A549 (cell line): ENCODE measurements at regions of chr9 and their contacts with region 1.

Region 1: DNA sequence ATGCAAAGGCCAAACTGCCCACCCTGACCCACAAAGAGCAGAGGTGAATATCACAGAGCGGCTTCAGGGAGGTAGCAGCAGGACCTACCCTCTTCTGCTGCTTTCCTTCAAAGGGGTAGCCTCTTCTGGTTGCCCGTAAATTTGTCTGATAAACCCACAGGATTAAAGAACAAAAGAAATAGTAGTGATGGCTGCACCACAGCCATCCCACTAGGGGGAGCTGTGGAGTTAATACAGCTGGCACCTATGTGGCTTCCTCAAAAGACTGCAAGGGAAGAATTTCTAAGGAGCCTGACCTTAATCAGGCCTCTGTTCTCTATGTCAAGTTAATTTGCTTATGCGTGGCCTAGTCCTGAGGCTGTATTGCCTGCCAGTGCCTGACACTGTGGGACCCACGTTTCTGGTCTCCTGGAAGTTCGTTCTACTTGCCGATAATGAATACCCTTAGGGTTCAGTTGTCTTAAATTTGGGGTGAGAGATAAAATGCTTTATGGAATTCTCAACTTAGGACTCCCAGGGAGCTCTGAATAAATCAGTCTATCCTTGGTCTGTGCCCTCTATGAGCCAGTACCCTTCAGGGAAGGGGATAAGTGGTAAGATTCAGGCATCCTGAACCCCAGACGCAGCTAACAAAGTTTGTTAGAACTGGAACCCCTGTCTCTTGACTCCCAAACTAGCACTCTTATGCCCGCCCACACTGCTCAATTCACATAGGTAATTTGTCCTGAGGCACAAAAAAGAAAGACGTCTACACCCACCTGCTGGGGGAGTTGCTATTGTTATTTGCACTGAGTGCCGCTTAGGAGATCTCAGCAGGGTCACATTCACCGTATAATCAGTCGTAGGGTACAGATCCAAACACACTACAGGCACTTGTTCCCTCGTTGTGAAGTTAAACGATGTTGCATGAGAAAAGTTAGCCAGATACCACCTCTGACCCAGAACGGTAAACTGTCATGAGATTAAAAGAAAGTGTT is 77.1 kb downstream of the SUSD1 start:
- DNase-seq: peak; percentile 72 to 76
- ATAC-seq: peak; percentile 93 to 97
- H3K4me3 ChIP-seq: no peak overlapping the region
- H3K27ac ChIP-seq: peak overlapping the region; percentile 48 to 75; a peak in 4 of 6 replicates
- H3K4me1 ChIP-seq: peaks cover 4% of the 10 kb centered on the region
- CTCF ChIP-seq: peak; percentile 92
- EP300 ChIP-seq: no peak
- POLR2A ChIP-seq: no peak
- RAD21 ChIP-seq: peak; percentile 88 to 93

Region 2: DNA sequence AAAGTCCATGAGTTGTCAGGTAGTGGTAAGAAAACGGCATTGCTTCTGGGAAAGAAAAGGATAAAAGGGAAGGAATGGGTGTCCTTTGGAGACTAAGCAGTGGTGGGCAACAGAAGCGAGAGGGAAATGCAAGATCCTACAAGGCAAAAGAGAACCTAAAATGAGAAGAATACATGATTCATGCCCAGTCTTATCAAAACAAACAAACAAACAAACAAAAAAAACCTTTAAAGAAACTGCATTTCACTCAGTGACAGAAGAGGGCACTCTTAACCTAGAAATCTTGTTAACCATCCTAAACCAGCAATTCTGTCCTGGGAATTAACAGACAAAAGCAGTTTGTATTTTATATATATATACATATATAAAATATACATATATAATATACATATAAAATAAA is 11.4 kb before region 1 on chr9:
- CTCF ChIA-PET with region 1: interaction called, 45 read pairs
- POLR2A ChIA-PET with region 1: no interaction called
- DNase-seq: peak; percentile 40 to 52
- ATAC-seq: peak in 1 of 2 experiments; percentile 50; a peak in 2 of 6 replicates
- H3K4me3 ChIP-seq: no peak overlapping the region
- H3K27ac ChIP-seq: no peak overlapping the region
- H3K4me1 ChIP-seq: no peaks in the 10 kb centered on the region
- CTCF ChIP-seq: peak; percentile 81
- EP300 ChIP-seq: no peak
- POLR2A ChIP-seq: no peak
- RAD21 ChIP-seq: peak; percentile 80

Region 3: GRCh38 chr9:112119225-112120029 is 21.4 kb after region 1 on chr9:
- CTCF ChIA-PET with region 1: interaction called, 66 read pairs
- POLR2A ChIA-PET with region 1: no interaction called
- DNase-seq: peak; percentile 72 to 94
- ATAC-seq: peak; percentile 91 to 93
- H3K4me3 ChIP-seq: no peak overlapping the region
- H3K27ac ChIP-seq: peak overlapping the region; percentile 94 to 95
- H3K4me1 ChIP-seq: peaks cover 70% of the 10 kb centered on the region
- CTCF ChIP-seq: no peak
- EP300 ChIP-seq: peak; percentile 90 to 93
- POLR2A ChIP-seq: no peak
- RAD21 ChIP-seq: peak in 1 of 2 experiments; percentile 49; a peak in 3 of 5 replicates

Region 4: DNA sequence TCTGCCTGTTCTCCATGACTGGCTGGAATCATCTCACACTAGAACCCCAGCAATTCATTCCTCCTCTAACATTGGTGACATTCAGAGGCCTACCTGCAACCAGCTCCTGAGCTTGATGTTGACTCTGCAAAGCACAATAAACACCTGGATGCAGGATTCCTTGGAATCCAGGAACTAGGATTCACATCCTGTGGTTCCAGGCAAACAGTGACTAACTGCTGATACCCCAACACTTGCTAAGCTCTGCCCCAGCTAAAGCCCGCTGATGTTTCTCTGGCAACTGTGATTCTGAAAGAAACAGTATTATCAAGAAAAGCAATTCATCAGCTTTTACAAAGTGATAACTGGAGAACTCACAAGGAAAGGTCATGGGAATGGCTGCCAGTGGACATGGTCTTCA is 47.9 kb after region 1 on chr9:
- CTCF ChIA-PET with region 1: interaction called, 13 read pairs
- POLR2A ChIA-PET with region 1: no interaction called
- DNase-seq: peak in 1 of 2 experiments; percentile 64
- ATAC-seq: peak in 1 of 2 experiments; percentile 32; a peak in 2 of 6 replicates
- H3K4me3 ChIP-seq: no peak overlapping the region
- H3K27ac ChIP-seq: peak overlapping the region; percentile 85 to 91
- H3K4me1 ChIP-seq: peaks cover 51% of the 10 kb centered on the region
- CTCF ChIP-seq: no peak
- EP300 ChIP-seq: no peak
- POLR2A ChIP-seq: no peak
- RAD21 ChIP-seq: no peak

Region 5: DNA sequence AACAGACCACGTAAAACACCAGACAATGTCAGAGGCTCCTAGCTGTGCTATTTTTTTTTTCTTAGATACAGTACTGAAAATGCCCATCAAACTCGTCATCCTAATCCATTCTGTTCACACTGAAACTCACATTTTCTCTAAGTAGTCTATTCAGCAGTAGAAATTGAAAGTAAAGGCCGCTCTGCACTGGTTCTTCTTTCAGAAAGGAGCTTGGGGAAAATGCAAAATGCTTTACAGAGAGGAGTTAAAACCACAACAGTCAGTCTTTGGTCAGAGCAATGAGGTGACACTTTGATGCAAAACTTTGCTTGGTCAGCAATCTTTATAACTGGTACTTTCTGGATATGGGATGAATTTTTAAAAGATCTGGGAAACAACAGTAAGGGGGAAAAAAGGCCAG is 120.9 kb after region 1 on chr9:
- CTCF ChIA-PET with region 1: no interaction called
- POLR2A ChIA-PET with region 1: no interaction called
- DNase-seq: no peak
- ATAC-seq: no peak
- H3K4me3 ChIP-seq: no peak overlapping the region
- H3K27ac ChIP-seq: no peak overlapping the region
- H3K4me1 ChIP-seq: no peaks in the 10 kb centered on the region
- CTCF ChIP-seq: no peak
- EP300 ChIP-seq: no peak
- POLR2A ChIP-seq: no peak
- RAD21 ChIP-seq: no peak